Colonic mucosa (tissue), 4 donors: ENCODE measurements at regions of chr18 and their contacts with region 1.

Region 1: DNA sequence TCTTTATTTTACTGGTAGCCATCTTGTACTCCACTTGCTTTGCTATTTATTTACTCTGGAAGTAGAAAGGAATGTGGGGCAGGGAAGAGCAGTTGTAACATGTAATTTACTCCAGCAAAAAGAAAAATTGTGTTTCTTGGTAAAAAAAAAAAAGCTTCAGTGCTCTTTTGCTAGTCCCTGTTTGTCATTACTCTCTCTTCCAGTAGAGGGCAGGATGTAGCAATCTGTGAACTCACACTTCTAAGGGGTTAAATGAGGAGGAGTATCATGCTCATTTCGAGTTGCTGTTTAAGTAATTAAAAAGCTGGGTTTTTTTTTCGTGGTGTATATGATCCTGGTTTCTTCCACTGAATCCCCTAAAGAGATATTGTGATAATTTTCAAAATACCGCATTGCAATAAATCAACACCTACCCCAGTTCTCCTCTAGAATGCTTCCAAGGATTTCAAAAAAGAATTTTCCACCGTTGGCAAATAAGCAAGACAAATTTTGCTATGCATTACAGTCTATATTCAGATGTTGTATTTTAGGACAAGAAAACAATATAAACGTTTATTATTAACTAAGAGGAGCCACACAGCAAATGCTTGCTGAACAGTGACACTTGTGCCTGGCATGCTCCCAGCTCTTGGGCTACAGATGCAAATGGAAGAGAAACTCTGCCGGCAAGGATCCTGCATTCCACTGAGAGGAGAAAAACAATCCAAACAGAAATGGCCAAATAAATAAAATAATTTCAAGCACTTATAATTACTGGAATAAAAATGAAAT is 261.6 kb downstream of the ASXL3 start:
- DNase-seq: peak; percentile 49
- H3K4me3 ChIP-seq: no peak overlapping the region
- H3K27ac ChIP-seq: no peak overlapping the region
- H3K4me1 ChIP-seq: no peaks in the 10 kb centered on the region
- H3K27me3 ChIP-seq: no peaks in the 10 kb centered on the region
- CTCF ChIP-seq: peak; percentile 62

Region 2: DNA sequence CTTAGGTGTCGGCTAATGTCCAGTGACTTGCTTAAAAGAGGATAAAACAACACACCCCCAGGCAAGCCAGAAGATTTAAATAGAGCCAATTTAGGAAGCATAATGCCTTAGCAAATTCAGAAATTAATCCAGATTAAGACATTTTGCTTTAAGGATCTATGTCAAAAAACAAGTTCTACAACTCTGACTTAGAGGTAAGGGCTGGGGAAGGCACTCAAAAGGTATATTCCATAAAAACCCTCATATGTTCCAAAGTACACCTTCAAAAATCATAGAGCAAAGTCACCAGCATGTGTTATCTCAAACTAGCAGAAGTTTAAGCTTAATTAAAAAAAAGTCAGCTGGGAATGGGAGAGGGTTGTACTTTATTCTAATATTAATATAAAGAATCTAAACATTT is 178.7 kb after region 1 on chr18:
- intact Hi-C with region 1: loop called (anchors 10 kb)
- DNase-seq: no peak
- H3K4me3 ChIP-seq: no peak overlapping the region
- H3K27ac ChIP-seq: no peak overlapping the region
- H3K4me1 ChIP-seq: no peaks in the 10 kb centered on the region
- H3K27me3 ChIP-seq: no peaks in the 10 kb centered on the region
- CTCF ChIP-seq: no peak

Region 3: DNA sequence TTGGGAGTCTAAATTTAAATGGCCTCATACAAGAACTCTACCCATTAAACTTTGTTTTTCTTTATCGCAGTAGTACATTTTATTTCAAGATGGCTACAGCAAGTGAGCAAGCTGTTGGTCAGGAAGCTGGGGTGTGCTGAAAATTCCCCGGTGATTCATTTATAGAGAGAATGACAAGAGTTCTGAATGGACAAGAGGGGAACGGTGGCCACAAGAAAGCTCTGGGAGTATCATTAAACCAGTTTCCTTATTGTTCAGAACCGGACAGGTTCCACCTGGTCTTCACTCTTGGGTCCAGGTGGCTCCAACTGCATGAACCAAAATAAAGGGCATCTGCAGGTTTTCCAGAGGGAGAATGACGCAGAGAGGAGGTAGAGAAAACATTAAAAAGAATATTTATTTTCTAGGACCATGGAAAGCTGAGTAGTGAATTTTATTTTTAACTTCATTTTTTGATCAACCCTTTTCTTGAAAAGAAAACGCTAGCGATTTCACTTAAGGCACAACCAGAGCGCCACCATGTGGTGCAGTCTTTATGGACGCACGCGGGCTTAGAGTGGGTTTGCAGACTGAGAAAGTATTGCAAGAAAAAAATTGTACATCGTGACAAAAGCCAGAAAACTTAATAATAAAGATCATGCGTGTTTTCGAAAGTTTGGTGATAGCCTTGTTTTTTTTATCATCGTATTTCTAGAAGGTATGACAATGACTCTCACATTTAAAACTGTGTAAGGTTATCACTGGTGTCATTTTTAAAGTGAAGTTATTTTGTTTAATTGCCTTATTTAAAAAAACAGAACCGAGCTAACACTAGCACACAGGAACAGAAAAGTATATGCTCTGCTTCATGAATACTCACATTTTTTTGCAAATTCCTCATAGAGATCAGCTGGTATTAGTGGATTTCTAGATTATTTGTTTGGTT is 483.0 kb after region 1 on chr18:
- intact Hi-C with region 1: loop called (anchors 10 kb)
- DNase-seq: peak; percentile 67
- H3K4me3 ChIP-seq: no peak overlapping the region
- H3K27ac ChIP-seq: no peak overlapping the region
- H3K4me1 ChIP-seq: no peaks in the 10 kb centered on the region
- H3K27me3 ChIP-seq: no peaks in the 10 kb centered on the region
- CTCF ChIP-seq: peak; percentile 52